Activated CD4-positive, alpha-beta T cell treated with anti-CD3 and anti-CD28 coated beads for 36 hours (primary cell): ENCODE measurements at regions of chr15 and their contacts with region 1.

Region 1: GRCh38 chr15:50765195-50765973 is at the start of gene SPPL2A:
- DNase-seq: peak; percentile 96
- ATAC-seq: peak; percentile 90
- H3K4me3 Mint-ChIP-seq: peak within 1 kb of the TSS; percentile 82
- H3K27ac Mint-ChIP-seq: peak within 1 kb of the TSS; percentile 99
- H3K4me1 Mint-ChIP-seq: peaks cover 50% of the 10 kb centered on the region
- H3K27me3 Mint-ChIP-seq: no peaks in the 10 kb centered on the region
- total RNA-seq, gene SPPL2A: 53.1 to 66.1 TPM

Region 2: DNA sequence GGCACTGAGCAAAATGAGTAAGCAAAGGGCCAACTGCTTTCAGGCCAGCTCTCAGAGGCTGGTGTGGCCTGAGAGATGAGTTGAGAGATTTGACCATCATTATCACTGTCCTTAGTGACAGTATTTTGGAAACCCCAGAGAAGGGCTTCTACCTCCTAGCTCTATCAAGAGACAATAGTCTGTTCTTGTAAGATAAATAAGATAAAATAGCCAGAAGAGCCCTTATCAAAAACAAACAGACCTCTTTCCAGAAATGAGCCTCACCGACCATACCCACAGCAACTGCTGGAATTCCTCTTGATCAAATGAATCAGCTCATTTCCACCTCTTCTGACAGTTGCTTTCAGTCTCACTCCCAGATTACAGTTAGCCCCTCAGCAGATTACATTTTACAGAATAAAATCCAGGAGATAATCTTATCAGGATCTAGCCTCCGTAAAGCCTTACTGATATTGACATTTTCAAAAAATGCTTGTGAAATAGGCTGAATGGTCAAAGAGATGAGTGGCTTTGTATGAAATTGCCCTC is 504.4 kb before region 1 on chr15:
- CTCF ChIA-PET with region 1: no interaction called
- POLR2A ChIA-PET with region 1: no interaction called
- intact Hi-C with region 1: loop called in 1 of 2 experiments (anchors 5 kb)
- DNase-seq: no peak
- ATAC-seq: peak; percentile 17
- H3K4me3 Mint-ChIP-seq: peak overlapping the region; percentile 37
- H3K27ac Mint-ChIP-seq: peak overlapping the region; percentile 95
- H3K4me1 Mint-ChIP-seq: peaks cover 69% of the 10 kb centered on the region
- H3K27me3 Mint-ChIP-seq: no peaks in the 10 kb centered on the region

Region 3: GRCh38 chr15:50424066-50424890 is 341.1 kb before region 1 on chr15 and contains the start of gene USP8:
- CTCF ChIA-PET with region 1: no interaction called
- POLR2A ChIA-PET with region 1: no interaction called
- intact Hi-C with region 1: loop called in 1 of 2 experiments (anchors 1 kb)
- DNase-seq: peak; percentile 97
- ATAC-seq: peak; percentile 98
- H3K4me3 Mint-ChIP-seq: peak within 1 kb of the TSS; percentile 88
- H3K27ac Mint-ChIP-seq: peak within 1 kb of the TSS; percentile 92
- H3K4me1 Mint-ChIP-seq: peaks cover 32% of the 10 kb centered on the region
- H3K27me3 Mint-ChIP-seq: no peaks in the 10 kb centered on the region
- total RNA-seq, gene USP8: 39.8 to 45.3 TPM

Region 4: DNA sequence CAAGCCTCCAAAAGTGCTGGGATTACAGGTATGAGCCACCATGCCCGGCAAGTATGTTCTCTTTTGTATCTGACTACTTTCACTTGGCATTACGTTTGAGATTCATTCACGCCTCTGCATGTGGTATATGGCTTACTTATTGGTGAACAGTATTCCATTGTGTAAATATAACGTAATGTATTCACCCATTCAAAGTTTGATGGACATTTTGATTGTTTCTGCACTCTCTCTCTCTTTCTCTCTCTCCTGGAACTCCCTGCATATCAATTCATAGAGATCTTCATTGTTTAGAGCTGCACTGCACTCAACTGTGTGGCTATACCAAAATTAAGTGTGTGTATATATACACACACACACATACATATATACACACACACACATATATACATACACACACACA is 30.2 kb before region 1 on chr15:
- CTCF ChIA-PET with region 1: no interaction called
- POLR2A ChIA-PET with region 1: interaction called, 10 read pairs
- intact Hi-C with region 1: no loop called
- DNase-seq: no peak
- ATAC-seq: no peak
- H3K4me3 Mint-ChIP-seq: no peak overlapping the region
- H3K27ac Mint-ChIP-seq: no peak overlapping the region
- H3K4me1 Mint-ChIP-seq: no peaks in the 10 kb centered on the region
- H3K27me3 Mint-ChIP-seq: no peaks in the 10 kb centered on the region

Region 5: GRCh38 chr15:51829360-51830275 is 1064.2 kb after region 1 on chr15 and contains the start of gene TMOD3:
- CTCF ChIA-PET with region 1: no interaction called
- POLR2A ChIA-PET with region 1: no interaction called
- intact Hi-C with region 1: loop called in 1 of 2 experiments (anchors 10 kb)
- DNase-seq: peak; percentile 93
- ATAC-seq: peak; percentile 81
- H3K4me3 Mint-ChIP-seq: peak within 1 kb of the TSS; percentile 84
- H3K27ac Mint-ChIP-seq: peak within 1 kb of the TSS; percentile 89
- H3K4me1 Mint-ChIP-seq: peaks cover 46% of the 10 kb centered on the region
- H3K27me3 Mint-ChIP-seq: no peaks in the 10 kb centered on the region
- total RNA-seq, gene TMOD3: 52.4 to 55.7 TPM

Region 6: DNA sequence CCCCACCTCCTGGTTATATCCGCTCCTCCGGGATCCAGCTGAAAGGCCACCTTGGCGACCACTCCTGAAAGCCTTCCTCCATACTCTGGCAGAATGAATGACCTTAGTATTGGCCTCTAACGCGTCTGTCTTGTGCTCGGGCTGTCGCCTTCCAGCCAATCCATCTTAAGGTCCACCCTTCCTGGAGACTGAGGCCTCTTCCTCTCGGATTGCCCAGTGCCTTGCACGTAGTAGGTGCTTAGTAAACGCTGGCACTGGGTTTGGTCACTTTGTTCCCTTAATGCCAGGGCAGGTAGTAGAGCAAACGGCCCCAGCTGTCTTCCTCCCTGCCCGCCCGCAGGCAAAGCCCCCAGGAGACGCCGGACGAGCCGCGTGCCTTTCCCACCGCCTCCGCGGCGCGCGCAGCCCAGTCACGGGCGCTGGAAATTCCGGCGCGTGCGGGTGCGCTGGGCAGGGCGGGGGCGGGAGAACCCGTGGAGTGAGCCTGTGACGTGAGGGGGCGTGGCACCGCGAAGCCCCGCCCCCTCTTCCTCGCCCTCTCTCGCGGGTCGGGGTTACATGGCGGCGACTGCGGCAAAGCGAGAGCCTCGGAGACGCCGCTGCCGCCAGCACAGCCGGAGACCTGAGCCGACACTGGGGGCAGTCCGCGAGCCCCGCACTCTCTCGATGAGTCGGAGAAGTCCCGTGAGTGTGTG is 1253.5 kb after region 1 on chr15 and contains the start of gene MAPK6:
- CTCF ChIA-PET with region 1: no interaction called
- POLR2A ChIA-PET with region 1: no interaction called
- intact Hi-C with region 1: loop called in 1 of 2 experiments (anchors 2 kb)
- DNase-seq: peak; percentile 97
- ATAC-seq: peak; percentile 76
- H3K4me3 Mint-ChIP-seq: peak within 1 kb of the TSS; percentile 86
- H3K27ac Mint-ChIP-seq: peak within 1 kb of the TSS; percentile 96
- H3K4me1 Mint-ChIP-seq: peaks cover 38% of the 10 kb centered on the region
- H3K27me3 Mint-ChIP-seq: peaks cover 5% of the 10 kb centered on the region
- total RNA-seq, gene MAPK6: 27.3 to 28.1 TPM